Activated CD4-positive, alpha-beta T cell treated with anti-CD3 and anti-CD28 coated beads, Interleukin-2, amount 10 ng/mL, durations not matched to agents 24 days and 14 days (primary cell): ENCODE measurements at regions of chr2 and their contacts with region 1.

Region 1: DNA sequence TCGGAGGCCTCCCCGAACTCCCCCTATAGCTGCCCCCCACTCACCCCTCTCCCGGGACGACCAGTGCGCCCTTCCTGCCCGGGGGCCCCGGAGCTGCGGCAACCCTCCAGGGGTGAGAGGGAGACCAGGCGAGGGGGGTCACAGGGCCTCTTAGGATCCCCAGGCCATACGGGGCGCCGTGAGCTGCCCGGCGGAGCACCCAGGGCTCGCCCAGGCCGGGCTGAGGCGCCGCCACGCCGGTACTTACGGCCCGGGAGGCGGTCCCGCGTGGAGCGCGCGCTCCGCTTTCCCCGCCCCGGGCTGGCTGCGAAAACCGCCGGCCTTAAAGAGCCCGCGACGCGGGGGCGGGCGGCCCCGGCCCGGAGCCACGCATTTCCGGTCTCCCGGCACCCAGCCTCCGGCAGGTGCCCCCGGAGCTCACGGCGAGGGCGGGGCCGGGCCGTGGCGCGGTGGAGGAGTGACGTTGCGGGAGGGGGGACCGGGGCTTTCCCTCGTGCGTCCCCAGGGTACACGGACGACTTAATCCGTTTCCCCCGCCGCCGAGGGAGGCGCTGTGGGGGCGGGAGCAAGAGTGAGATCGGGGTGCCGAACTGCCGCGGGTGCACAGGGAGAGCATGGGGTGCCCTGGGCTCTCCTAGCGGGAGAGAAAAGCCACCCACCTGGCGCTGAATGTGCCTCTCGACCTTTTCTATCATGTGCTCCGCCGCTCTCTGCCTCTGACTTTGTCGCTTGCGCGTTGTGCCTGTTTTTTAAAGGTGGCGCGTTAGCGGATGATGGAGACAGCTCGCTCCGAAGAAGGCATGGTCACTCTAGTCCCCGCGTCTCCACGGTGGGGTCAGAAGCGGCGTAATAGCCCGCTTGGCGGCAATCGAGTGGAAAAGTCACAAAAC is at the start of gene METTL21A:
- DNase-seq: peak; percentile 98
- H3K4me3 Mint-ChIP-seq: peak within 1 kb of the TSS; percentile 95
- H3K27ac Mint-ChIP-seq: peak within 1 kb of the TSS; percentile 98
- H3K4me1 Mint-ChIP-seq: peaks cover 32% of the 10 kb centered on the region
- H3K27me3 Mint-ChIP-seq: no peaks in the 10 kb centered on the region
- total RNA-seq, gene METTL21A: 37.9 and 42.6 TPM in 2 replicates

Region 2: DNA sequence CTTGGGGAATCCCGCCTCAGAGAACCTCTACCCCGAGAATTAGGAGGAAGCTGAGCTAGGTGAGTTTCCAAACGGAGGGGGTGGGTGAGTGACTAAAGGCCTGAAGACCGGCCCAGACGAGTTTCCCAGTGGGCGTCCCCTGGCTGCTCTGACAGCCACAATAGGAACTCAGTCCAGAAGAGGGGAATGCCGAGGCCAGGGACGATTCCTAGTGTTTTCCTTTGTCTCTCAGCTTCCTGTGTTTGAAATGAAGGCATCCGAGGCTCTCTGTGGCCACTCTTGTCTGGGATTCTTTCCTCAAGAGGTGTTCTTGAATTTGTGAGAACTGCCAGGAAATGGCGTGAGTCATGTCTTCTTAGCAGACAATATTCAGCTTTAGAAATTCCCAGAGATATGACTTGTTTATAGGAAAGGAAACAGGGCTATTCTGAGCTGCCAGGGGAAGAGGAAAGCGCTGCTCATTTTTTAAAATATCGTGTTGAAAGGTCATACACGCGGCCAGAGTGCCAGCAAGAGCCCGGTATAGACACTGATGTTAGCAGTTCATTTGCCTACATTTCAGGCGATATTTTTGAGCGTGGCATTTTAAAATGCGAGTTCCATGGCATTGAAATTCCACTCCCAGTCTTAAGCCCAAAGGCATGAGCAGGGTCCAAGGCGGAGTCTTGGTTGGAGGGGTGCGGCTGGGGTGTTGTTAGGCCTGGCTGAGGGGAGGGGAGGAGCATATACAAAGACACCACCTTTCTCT is 290.5 kb before region 1 on chr2:
- intact Hi-C with region 1: loop called (anchors 10 kb)
- DNase-seq: peak; percentile 68
- H3K4me3 Mint-ChIP-seq: peak overlapping the region; percentile 52
- H3K27ac Mint-ChIP-seq: peak overlapping the region; percentile 86
- H3K4me1 Mint-ChIP-seq: peaks cover 68% of the 10 kb centered on the region
- H3K27me3 Mint-ChIP-seq: no peaks in the 10 kb centered on the region

Region 3: GRCh38 chr2:207769597-207770486 is 144.6 kb after region 1 on chr2 and contains the start of gene FZD5:
- intact Hi-C with region 1: loop called (anchors 1 kb)
- DNase-seq: peak; percentile 94
- H3K4me3 Mint-ChIP-seq: peak within 1 kb of the TSS; percentile 89
- H3K27ac Mint-ChIP-seq: peak within 1 kb of the TSS; percentile 41
- H3K4me1 Mint-ChIP-seq: peaks cover 23% of the 10 kb centered on the region
- H3K27me3 Mint-ChIP-seq: peaks cover 61% of the 10 kb centered on the region
- total RNA-seq, gene FZD5: 0.75 and 1.1 TPM in 2 replicates

Region 4: DNA sequence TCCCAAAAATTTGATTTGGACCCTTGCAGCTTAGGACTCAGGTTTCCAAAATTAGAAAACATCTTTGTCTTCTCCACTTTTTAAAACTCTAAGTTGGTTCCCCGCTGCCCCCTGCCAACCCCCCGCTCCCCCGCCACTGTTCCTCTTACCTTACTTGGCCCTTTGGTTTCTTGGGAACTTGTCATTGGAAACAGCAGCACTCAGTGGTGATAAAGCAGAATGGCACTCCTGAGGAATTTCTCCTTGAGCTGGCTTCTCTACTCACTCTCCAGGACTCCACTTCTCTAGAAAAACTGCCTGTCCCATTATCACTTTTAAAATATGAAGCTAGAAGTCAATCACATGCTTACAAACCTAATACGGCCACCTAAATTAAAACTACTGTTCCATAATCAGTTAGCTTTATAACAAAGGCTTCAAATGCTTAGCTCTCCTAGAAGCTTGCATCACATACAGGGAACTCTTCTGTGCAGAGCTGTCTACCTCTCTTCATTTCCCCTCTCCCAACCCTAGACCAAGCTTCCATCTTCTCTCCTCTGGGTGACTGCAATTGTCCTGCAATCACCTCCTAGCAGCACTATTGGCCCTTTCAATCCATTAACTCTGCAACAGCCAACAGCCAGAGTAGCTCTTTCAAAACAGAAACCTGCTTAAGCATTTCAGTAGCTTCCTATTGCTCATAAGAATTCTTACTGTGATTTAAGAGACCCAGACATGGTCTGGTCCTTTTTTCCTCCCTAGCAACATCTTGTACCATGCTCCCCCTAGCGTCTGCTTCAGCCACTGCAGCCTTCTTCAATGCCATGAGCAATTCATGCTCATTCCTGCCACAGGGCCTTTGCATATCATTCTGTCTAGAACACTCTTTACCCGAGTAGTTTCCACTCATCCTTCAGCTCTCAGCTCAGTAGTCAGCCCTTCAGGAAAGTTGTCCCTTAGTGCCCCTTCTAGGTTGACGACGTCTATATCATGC is 415.2 kb after region 1 on chr2:
- intact Hi-C with region 1: loop called (anchors 2 kb)
- DNase-seq: peak; percentile 91
- H3K4me3 Mint-ChIP-seq: no peak overlapping the region
- H3K27ac Mint-ChIP-seq: peak overlapping the region; percentile 34
- H3K4me1 Mint-ChIP-seq: peaks cover 2% of the 10 kb centered on the region
- H3K27me3 Mint-ChIP-seq: peaks cover 17% of the 10 kb centered on the region

Region 5: DNA sequence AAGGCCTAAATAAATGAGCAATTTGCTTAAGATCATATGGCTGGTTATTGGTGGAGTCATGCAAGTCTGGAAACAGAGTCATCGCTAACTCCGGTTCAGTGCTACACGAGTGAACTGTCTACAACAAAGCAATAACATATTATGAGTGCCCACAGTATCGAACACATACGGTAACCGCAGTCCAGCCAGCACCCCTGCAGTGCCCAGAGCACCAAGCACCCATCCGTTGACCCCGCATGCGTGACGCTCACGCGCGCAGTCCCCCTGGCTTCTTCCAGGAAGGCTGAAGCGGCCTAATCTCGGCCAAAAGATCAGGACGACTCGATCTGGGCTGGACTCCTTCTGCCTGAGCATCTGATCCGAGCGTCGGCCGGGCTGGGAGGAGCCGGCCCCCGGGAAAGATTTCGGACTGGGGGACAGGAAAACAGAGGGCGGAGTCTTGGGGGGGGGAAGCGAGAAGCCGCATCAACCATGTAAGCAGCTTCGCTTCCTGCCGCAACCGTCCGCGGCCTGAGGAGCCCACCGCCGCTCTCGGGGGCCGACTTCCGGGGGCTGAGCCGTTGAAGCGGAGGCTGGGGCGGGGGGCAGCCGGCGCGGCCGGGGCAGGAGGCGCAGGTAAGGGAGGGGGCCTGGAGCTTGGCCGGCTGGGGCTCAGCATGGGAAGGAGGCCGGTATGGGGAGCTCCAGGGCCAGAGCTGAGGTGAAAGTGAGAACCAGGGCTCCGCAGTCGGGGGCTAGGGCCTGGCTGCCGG is 640.7 kb after region 1 on chr2 and contains the start of gene PIKFYVE:
- intact Hi-C with region 1: loop called (anchors 2 kb)
- DNase-seq: peak; percentile 97
- H3K4me3 Mint-ChIP-seq: peak within 1 kb of the TSS; percentile 95
- H3K27ac Mint-ChIP-seq: peak within 1 kb of the TSS; percentile 94
- H3K4me1 Mint-ChIP-seq: peaks cover 36% of the 10 kb centered on the region
- H3K27me3 Mint-ChIP-seq: no peaks in the 10 kb centered on the region
- total RNA-seq, gene PIKFYVE: 27.3 and 29.4 TPM in 2 replicates